ENCODE measurements at regions of chr10 and their contacts with region 1.

Region 1: DNA sequence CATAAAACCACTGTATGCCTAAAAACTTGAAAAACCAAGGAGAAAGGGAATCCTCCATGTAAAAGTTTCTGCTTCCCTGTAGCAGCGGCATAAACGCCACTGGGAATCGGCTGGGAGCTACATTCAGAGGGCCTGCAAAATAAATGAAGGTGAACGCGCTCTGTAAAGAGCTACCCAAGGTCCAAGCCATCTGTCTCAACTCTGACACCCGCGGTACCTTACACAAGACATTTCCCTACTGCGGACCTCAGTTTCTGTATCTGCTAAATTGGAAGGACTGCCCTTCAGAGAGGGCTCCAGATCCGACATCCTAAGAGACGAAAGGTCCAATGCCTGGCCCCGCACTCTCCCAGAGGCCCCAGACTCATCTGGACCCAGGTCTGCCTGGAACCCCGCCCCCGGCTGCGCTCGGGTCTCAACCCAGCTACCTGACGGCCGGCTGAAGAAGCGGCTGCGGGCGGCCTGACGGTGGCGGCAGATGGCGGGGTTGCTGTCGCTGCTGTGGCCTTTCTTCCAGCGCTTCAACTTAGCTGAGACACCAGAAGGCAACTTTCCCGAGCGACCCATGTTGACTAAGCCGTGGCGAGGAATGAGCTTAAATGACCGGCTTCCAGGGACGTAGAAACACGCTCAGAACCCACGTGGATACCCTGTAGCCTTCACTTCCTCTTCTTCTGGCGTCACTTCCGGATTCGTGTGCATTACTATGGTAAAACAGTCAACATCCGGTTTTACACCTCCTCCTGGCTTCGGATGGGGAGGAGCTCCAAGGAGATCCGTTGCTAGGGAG is at the start of gene RRP12:
- DNase-seq: peak; percentile 71 to 92 (median 91)
- ATAC-seq: peak; percentile 90 to 98 (median 97)
- H3K4me3 ChIP-seq: peak within 1 kb of the TSS; percentile 55 to 93 (median 78)
- H3K27ac ChIP-seq: peak within 1 kb of the TSS; percentile 29 to 86 (median 75)
- H3K4me1 ChIP-seq: peaks cover 0 to 20% (median 11%) of the 10 kb centered on the region in 12 donors
- H3K27me3 ChIP-seq: no peaks in the 10 kb centered on the region
- CTCF ChIP-seq: peak in 2 of 12 donors; percentile 18 to 30
- POLR2A ChIP-seq: no peak
- total RNA-seq, gene RRP12: 6.0 to 34.1 (median 18.3) TPM

Region 2: GRCh38 chr10:97334370-97335175 is 66.3 kb before region 1 on chr10 and contains the start of gene FRAT2:
- intact Hi-C with region 1: loop called in 1 of 10 experiments (anchors 5 kb)
- DNase-seq: peak; percentile 93 to 96 (median 94)
- ATAC-seq: peak; percentile 94 to 97 (median 96)
- H3K4me3 ChIP-seq: peak within 1 kb of the TSS; percentile 67 to 100 (median 90)
- H3K27ac ChIP-seq: peak within 1 kb of the TSS; percentile 88 to 99 (median 95)
- H3K4me1 ChIP-seq: peaks cover 2 to 68% (median 38%) of the 10 kb centered on the region in 12 donors
- H3K27me3 ChIP-seq: no peaks in the 10 kb centered on the region
- CTCF ChIP-seq: no peak
- POLR2A ChIP-seq: peak in 1 of 2 donors; percentile 83
- total RNA-seq, gene FRAT2: 4.4 to 12.4 (median 7.5) TPM

Region 3: DNA sequence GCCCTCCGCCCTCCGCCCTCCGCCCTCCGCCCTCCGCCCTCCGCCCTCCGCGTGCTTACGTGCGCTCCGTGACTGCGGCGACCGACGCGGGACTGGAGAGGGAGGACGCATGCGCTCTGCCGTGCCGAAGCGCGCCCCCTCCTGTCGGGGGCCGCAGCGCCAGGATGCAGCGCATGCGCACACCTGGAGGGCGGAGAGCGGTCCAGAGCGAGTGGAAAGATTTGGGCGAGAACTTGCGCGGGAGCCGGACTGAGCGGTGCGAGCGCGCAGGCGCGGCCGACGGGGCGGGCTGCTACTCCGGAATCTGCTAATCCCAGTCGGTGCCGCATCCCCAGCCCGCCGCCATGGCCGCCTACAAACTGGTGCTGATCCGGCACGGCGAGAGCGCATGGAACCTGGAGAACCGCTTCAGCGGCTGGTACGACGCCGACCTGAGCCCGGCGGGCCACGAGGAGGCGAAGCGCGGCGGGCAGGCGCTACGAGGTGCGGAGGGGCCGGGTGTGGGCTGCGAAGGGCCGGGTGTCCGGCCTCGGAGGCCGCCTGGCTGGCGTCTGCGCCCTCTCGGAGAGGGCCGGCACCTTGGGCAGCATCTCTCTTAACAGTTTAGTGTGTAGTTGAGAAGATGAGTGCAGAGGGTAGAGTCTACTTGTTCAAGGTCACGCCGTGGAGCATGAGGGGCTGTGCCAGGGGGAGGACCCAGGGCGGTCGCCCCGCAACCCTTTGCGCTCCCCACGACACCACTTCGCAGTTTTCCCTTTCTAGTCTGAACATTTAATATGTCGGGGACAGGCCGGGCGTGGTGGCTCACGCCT is 25.3 kb after region 1 on chr10 and contains the start of gene PGAM1:
- intact Hi-C with region 1: no loop called
- DNase-seq: peak; percentile 96 to 99 (median 97)
- ATAC-seq: peak; percentile 95 to 97 (median 97)
- H3K4me3 ChIP-seq: peak within 1 kb of the TSS; percentile 60 to 99 (median 84)
- H3K27ac ChIP-seq: peak within 1 kb of the TSS; percentile 49 to 96 (median 93)
- H3K4me1 ChIP-seq: peaks cover 3 to 63% (median 27%) of the 10 kb centered on the region in 12 donors
- H3K27me3 ChIP-seq: no peaks in the 10 kb centered on the region
- CTCF ChIP-seq: peak; percentile 53 to 81 (median 67)
- POLR2A ChIP-seq: peak in 1 of 2 donors; percentile 80
- total RNA-seq, gene PGAM1: 204 to 343 (median 250) TPM

Region 4: DNA sequence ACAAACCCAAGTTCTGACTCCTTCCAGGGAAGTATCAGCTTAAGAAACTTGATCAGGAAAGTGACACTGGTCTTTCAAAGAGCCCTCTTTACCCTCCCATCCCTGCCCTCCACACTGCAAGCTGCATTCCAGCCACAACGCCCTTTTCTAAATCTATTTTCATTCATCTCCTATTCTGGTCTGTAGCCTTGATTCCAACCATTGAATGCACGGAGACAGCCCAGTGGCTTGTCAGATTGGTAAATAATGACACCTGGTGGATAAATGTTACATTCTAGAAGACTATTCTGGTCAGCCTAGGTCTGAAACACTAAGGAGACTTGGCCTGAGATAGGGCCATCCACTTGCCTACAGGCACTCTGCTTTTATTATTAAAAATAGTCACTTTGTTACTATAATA is 211.5 kb after region 1 on chr10:
- intact Hi-C with region 1: loop called in 5 of 10 experiments (anchors 2 to 10 kb)
- DNase-seq: no peak
- ATAC-seq: peak; percentile 54 to 72 (median 64)
- H3K4me3 ChIP-seq: no peak overlapping the region
- H3K27ac ChIP-seq: peak overlapping the region in 10 of 12 donors; percentile 8 to 91 (median 79)
- H3K4me1 ChIP-seq: peaks cover 0 to 41% (median 7%) of the 10 kb centered on the region in 12 donors
- H3K27me3 ChIP-seq: no peaks in the 10 kb centered on the region
- CTCF ChIP-seq: peak; percentile 31 to 67 (median 55)
- POLR2A ChIP-seq: no peak

Region 5: DNA sequence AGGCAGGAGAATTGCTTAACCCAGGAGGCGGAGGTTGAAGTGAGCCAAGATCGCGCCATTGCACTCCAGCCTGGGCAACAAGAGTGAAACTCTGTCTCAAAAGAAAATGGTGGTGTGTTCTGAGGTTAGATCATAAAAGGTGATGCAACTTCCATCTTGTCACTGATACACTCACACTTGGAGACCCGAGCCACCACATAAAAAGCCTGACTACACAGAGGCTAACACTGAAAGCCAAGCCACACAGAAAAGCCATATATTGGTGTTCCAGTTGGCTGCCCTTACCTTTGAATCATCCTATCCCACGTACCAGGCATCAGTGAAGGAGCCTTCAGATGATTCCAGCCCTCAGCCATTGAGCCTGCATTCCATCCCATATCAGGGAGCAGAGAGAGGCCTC is 228.4 kb after region 1 on chr10:
- intact Hi-C with region 1: loop called in 1 of 10 experiments (anchors 10 kb)
- DNase-seq: no peak
- ATAC-seq: no peak
- H3K4me3 ChIP-seq: no peak overlapping the region
- H3K27ac ChIP-seq: no peak overlapping the region
- H3K4me1 ChIP-seq: peaks cover 0 to 16% (median 5%) of the 10 kb centered on the region in 12 donors
- H3K27me3 ChIP-seq: no peaks in the 10 kb centered on the region
- CTCF ChIP-seq: no peak
- POLR2A ChIP-seq: no peak

Region 6: GRCh38 chr10:97736902-97737769 is 336.3 kb after region 1 on chr10 and contains the start of gene ZFYVE27:
- intact Hi-C with region 1: loop called in 1 of 10 experiments (anchors 10 kb)
- DNase-seq: peak; percentile 97 to 99 (median 98)
- ATAC-seq: peak; percentile 96 to 98 (median 96)
- H3K4me3 ChIP-seq: peak within 1 kb of the TSS; percentile 75 to 100 (median 90)
- H3K27ac ChIP-seq: peak within 1 kb of the TSS; percentile 66 to 97 (median 92)
- H3K4me1 ChIP-seq: peaks cover 4 to 32% (median 18%) of the 10 kb centered on the region in 12 donors
- H3K27me3 ChIP-seq: no peaks in the 10 kb centered on the region
- CTCF ChIP-seq: no peak
- POLR2A ChIP-seq: peak; percentile 87 to 96
- total RNA-seq, gene ZFYVE27: 7.3 to 16.1 (median 13.1) TPM

Measured in heart left ventricle (tissue), 16 donors.